Activated CD4-positive, alpha-beta T cell treated with anti-CD3 and anti-CD28 coated beads for 36 hours (primary cell): ENCODE measurements at regions of chr17 and their contacts with region 1.

Region 1: GRCh38 chr17:41548844-41549595 is 20.9 kb upstream of the KRT19 start:
- DNase-seq: peak; percentile 93
- ATAC-seq: peak; percentile 81
- H3K4me3 Mint-ChIP-seq: no peak overlapping the region
- H3K27ac Mint-ChIP-seq: peak overlapping the region; percentile 42
- H3K4me1 Mint-ChIP-seq: peaks cover 22% of the 10 kb centered on the region
- H3K27me3 Mint-ChIP-seq: peaks cover 10% of the 10 kb centered on the region

Region 2: DNA sequence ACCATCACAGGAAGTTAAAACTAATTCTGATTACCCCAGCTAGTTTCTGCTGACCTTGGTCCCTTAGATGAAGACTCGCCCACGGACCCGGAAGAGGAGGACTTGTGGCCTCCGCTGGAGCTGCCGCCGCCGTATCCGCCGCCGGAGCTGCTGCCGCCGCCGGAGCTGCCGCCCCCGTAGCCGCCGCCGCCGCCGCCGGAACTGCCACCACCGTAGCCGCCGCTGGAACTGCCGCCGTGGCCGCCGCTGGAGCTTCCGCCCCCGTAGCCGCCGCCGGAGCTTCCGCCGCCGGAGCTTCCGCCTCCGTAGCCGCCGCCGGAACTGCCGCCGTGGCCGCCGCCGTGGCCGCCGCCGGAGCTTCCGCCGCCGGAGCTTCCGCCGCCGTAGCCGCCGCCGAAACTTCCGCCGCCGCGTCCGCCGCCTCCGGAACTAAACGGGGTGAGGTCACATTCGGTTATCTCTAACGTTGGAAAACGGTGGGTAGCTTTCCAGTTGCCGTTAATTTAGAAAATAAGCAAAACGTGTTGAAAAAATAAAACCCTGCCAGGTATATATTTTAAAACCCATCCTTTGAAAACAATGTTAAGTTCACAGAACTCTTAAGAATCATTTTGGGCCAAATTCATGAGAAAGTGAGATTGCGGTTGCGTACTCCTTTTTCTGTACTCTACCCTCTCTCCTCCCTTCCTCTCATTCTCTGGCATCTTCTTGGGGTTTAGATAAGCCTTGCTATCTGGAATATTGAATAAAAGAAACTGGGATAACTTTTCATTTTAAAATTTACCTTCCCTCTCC is 730.1 kb before region 1 on chr17:
- CTCF ChIA-PET with region 1: interaction called, 9 read pairs
- POLR2A ChIA-PET with region 1: no interaction called
- intact Hi-C with region 1: loop called in 1 of 2 experiments (anchors 2 kb)
- DNase-seq: peak; percentile 91
- ATAC-seq: peak; percentile 84
- H3K4me3 Mint-ChIP-seq: peak overlapping the region; percentile 95
- H3K27ac Mint-ChIP-seq: peak overlapping the region; percentile 97
- H3K4me1 Mint-ChIP-seq: peaks cover 25% of the 10 kb centered on the region
- H3K27me3 Mint-ChIP-seq: peaks cover 1% of the 10 kb centered on the region

Region 3: GRCh38 chr17:41338961-41339485 is 210.0 kb before region 1 on chr17:
- CTCF ChIA-PET with region 1: interaction called, 3 read pairs
- POLR2A ChIA-PET with region 1: no interaction called
- intact Hi-C with region 1: loop called in 1 of 2 experiments (anchors 5 kb)
- DNase-seq: peak; percentile 41
- ATAC-seq: peak; percentile 66
- H3K4me3 Mint-ChIP-seq: no peak overlapping the region
- H3K27ac Mint-ChIP-seq: peak overlapping the region; percentile 55
- H3K4me1 Mint-ChIP-seq: peaks cover 76% of the 10 kb centered on the region
- H3K27me3 Mint-ChIP-seq: peaks cover 4% of the 10 kb centered on the region

Region 4: GRCh38 chr17:41496820-41497408 is 52.1 kb before region 1 on chr17:
- CTCF ChIA-PET with region 1: interaction called, 9 read pairs
- POLR2A ChIA-PET with region 1: no interaction called
- intact Hi-C with region 1: loop called in 1 of 2 experiments (anchors 1 kb)
- DNase-seq: peak; percentile 87
- ATAC-seq: peak; percentile 100
- H3K4me3 Mint-ChIP-seq: no peak overlapping the region
- H3K27ac Mint-ChIP-seq: peak overlapping the region; percentile 10
- H3K4me1 Mint-ChIP-seq: peaks cover 10% of the 10 kb centered on the region
- H3K27me3 Mint-ChIP-seq: no peaks in the 10 kb centered on the region

Region 5: DNA sequence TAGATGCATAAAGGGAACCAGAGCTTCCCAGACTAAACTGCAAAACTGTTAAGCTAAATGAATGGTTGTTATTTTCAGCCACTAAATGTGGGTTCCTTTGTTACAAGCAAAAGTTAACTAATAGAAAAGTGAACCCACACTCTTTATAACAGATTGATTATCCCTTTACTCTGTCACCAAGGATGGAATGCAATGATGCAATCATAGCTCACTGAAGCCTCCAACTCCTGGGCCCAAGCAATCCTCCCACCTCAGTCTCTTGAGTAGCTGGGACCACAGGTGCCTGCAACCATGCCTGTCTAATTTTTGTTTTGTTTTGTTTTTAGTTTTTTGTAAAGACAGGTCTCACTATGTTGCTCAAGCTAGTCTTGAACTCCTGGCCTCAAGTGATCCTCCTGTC is 16.3 kb after region 1 on chr17:
- CTCF ChIA-PET with region 1: interaction called, 38 read pairs
- POLR2A ChIA-PET with region 1: no interaction called
- intact Hi-C with region 1: no loop called
- DNase-seq: no peak
- ATAC-seq: no peak
- H3K4me3 Mint-ChIP-seq: no peak overlapping the region
- H3K27ac Mint-ChIP-seq: no peak overlapping the region
- H3K4me1 Mint-ChIP-seq: peaks cover 8% of the 10 kb centered on the region
- H3K27me3 Mint-ChIP-seq: peaks cover 19% of the 10 kb centered on the region

Region 6: DNA sequence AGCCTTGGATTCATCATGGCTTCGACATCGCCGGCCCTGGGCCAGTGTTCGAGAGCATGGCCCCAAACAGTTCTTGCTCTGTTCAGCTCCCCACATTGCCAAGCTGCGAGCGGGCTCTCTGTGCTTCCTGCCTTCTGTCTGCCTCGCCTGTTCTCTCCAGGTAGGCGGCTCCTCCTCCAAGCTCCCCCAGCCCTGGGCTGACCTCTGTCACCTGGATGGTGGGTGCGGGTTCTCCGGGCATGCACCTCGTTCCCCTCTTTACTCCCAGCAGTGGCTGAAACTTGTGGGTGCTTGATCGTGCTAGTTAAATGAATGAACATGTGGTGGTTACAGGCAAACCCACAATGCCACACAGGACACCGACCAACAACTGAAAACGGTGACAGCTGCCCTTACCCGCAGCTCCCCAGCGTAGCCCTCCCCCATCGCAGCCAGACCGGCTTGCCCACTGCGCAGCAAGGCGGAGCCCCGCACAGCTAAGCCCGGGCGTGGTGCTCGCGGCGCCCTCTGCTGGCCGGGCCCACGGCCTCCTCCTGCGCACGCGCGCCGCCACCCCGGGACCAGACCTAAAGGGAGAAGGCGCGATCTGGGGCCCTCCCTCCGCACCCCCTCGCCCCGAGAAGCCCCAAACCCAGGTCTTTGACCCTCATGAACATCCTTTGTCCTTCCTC is 116.7 kb after region 1 on chr17:
- CTCF ChIA-PET with region 1: interaction called, 71 read pairs
- POLR2A ChIA-PET with region 1: no interaction called
- intact Hi-C with region 1: loop called (anchors 1 kb)
- DNase-seq: peak; percentile 95
- ATAC-seq: peak; percentile 85
- H3K4me3 Mint-ChIP-seq: peak overlapping the region; percentile 78
- H3K27ac Mint-ChIP-seq: peak overlapping the region; percentile 95
- H3K4me1 Mint-ChIP-seq: peaks cover 42% of the 10 kb centered on the region
- H3K27me3 Mint-ChIP-seq: peaks cover 3% of the 10 kb centered on the region

Region 7: GRCh38 chr17:41758601-41759000 is 209.6 kb after region 1 on chr17:
- CTCF ChIA-PET with region 1: no interaction called
- POLR2A ChIA-PET with region 1: no interaction called
- intact Hi-C with region 1: no loop called
- DNase-seq: no peak
- ATAC-seq: no peak
- H3K4me3 Mint-ChIP-seq: no peak overlapping the region
- H3K27ac Mint-ChIP-seq: no peak overlapping the region
- H3K4me1 Mint-ChIP-seq: no peaks in the 10 kb centered on the region
- H3K27me3 Mint-ChIP-seq: no peaks in the 10 kb centered on the region